Transverse colon (tissue), 4 donors: ENCODE measurements at regions of chr12 and their contacts with region 1.

Region 1: DNA sequence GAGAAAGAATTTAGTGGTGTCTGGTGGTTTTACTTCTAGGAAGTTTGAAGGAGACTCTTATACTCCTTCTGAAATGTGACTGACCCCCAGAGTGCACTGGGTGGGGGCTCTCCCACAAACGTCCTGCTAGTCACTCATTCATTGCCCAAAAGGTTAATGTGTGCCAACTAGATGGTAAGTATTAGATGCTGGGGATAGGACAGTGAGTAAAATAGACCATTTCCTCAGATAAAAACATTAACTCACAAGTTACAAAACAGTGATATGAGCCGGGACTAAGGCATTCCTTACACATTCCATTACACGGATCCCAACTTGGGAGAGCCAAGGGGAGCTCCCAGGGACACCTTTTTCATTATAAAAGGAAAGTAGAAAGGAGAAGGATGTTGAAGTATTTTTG is 185.1 kb downstream of the ATXN7L3B start:
- DNase-seq: no peak
- H3K4me3 ChIP-seq: no peak overlapping the region
- H3K27ac ChIP-seq: no peak overlapping the region
- H3K4me1 ChIP-seq: no peaks in the 10 kb centered on the region
- H3K27me3 ChIP-seq: no peaks in the 10 kb centered on the region
- CTCF ChIP-seq: no peak
- EP300 ChIP-seq: no peak
- POLR2A ChIP-seq: no peak

Region 2: DNA sequence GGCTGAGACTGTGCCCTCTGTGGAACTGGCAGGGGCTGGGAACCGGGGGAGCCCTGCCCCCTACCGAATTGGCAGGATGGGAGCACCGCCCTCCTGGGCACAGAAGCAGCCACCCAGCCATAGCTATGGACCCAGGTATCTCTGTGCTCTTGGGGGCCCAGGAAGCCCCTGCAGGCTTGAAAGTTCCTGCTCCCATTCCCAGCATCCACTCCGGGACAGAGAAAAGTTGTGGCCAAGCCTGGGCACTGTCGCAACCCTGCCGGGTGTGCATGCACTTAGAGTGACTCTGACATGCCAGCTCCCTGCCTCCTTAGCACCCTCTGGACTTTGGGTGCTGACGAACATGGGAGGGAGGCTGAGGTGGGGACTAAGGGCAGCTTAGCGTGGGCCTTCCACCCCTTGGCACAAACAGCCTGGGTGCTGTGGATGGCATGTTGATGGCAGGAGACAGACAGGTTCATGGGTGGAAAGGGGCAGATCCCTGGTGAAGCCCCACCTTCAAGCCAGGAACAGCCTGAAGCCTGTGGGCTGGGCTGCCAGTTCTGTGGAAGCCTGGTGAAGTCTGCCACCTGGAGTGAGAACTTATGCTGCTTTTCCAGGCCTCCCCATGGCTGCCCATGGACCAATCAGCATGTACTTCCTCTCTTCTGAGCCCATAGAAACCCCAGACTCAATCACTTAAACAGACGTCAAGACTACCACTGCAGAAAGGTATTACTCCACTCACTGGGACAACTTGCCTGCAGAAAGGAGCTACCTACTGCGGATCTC is 93.9 kb after region 1 on chr12:
- in situ Hi-C with region 1: loop called in 1 of 4 experiments (anchors 25 kb)
- intact Hi-C with region 1: no loop called
- DNase-seq: no peak
- H3K4me3 ChIP-seq: no peak overlapping the region
- H3K27ac ChIP-seq: no peak overlapping the region
- H3K4me1 ChIP-seq: no peaks in the 10 kb centered on the region
- H3K27me3 ChIP-seq: no peaks in the 10 kb centered on the region
- CTCF ChIP-seq: no peak
- EP300 ChIP-seq: no peak
- POLR2A ChIP-seq: no peak